Right lobe of liver (tissue), 6 donors: ENCODE measurements at regions of chr1 and their contacts with region 1.

Region 1: DNA sequence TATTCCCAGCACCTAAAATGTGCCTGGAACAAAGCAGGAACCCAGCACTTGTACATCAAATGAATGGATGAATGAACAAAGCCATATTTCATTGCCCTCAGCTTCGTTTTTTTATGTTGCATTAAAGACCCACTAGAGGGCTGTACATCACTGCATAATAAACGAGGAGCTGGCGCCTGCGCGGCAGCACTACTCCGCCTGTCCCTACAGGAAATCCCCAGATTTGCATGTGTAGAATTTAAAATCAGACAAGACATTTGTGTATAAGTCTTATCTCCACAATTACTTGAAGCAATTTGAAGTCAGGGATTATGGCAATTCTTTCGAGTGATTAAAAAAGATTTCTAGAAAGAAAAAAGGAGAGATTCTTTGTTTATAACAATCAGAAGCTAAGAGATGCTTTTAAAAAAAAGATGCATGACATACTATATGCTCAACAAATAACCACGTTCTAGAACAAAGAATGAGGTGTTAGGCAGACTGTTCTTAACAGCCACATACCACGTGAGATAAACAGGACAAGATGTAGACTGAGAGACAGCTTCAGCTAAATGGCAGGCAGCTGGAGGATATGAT is 5.4 kb upstream of the NEK2 start:
- DNase-seq: peak; percentile 62 to 76 (median 71)
- ATAC-seq: peak; percentile 88 to 93 (median 90)
- H3K4me3 ChIP-seq: no peak overlapping the region
- H3K27ac ChIP-seq: no peak overlapping the region
- H3K4me1 ChIP-seq: no peaks in the 10 kb centered on the region
- H3K27me3 ChIP-seq: no peaks in the 10 kb centered on the region
- CTCF ChIP-seq: peak; percentile 63 to 91 (median 65)
- POLR2A ChIP-seq: no peak

Region 2: GRCh38 chr1:211830330-211831142 is 149.7 kb after region 1 on chr1 and contains the start of gene LPGAT1:
- intact Hi-C with region 1: loop called in 1 of 2 experiments (anchors 10 kb)
- DNase-seq: peak; percentile 89 to 90 (median 90)
- ATAC-seq: peak; percentile 82 to 94 (median 90)
- H3K4me3 ChIP-seq: peak within 1 kb of the TSS; percentile 26 to 76 (median 64)
- H3K27ac ChIP-seq: peak within 1 kb of the TSS; percentile 92 to 96 (median 95)
- H3K4me1 ChIP-seq: peaks cover 0 to 31% (median 0%) of the 10 kb centered on the region in 4 donors
- H3K27me3 ChIP-seq: no peaks in the 10 kb centered on the region
- CTCF ChIP-seq: peak; percentile 57 to 82 (median 64)
- POLR2A ChIP-seq: peak; percentile 80
- total RNA-seq, gene LPGAT1: 32.0 to 141 (median 55.7) TPM

Region 3: GRCh38 chr1:212035123-212035834 is 354.4 kb after region 1 on chr1 and contains the starts of genes DTL and INTS7:
- intact Hi-C with region 1: loop called in 1 of 2 experiments (anchors 10 kb)
- DNase-seq: peak; percentile 99
- ATAC-seq: peak; percentile 87 to 97 (median 92)
- H3K4me3 ChIP-seq: peak within 1 kb of the TSS; percentile 54 to 60 (median 60)
- H3K27ac ChIP-seq: peak within 1 kb of the TSS; percentile 77 to 78 (median 78)
- H3K4me1 ChIP-seq: peaks cover 0 to 23% (median 3%) of the 10 kb centered on the region in 4 donors
- H3K27me3 ChIP-seq: no peaks in the 10 kb centered on the region
- CTCF ChIP-seq: peak; percentile 89 to 97 (median 96)
- POLR2A ChIP-seq: peak; percentile 80
- total RNA-seq, gene DTL: 0.07 to 12.2 (median 0.94) TPM
- total RNA-seq, gene INTS7: 5.9 to 14.2 (median 9.6) TPM